SK-N-SH (cell line): ENCODE measurements at regions of chr1 and their contacts with region 1.

Region 1: DNA sequence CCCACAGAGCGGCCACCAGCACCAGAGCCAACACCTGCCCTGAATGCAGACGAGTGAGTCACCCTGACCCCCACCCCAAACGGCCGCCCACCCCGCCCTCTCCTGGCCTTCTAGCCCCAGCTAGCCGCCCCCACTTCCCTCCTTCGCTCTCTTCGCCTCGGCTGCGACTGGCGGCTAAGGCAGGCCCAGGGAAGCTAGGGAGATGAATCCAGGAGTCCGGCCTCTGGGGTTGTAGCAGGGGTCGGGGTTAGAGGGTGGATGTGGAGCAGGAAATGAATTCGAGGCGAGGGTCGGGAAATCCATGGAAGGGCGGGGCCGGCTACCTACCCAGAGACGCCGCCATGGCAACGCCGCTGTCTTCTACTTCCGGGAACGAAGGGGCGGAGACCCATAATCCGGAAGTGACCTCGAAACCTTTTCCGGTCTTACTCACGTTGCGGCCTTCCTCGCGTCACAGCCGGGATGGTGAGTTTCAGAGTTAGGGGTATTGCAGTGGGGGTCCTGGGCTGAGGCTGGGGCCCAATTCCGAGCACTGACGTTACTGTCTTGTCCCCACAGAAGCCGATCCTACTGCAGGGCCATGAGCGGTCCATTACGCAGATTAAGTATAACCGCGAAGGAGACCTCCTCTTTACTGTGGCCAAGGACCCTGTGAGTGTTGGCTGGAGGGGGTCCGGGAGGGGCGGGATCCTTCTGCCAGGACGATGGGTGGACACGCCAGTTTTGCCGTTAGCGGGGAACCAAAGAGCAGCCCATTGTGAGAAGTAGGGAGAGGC is at the starts of genes EIF3I and TMEM234:
- DNase-seq: peak; percentile 93
- H3K4me3 ChIP-seq: peak within 1 kb of the TSS; percentile 59 to 79
- H3K27ac ChIP-seq: peak within 1 kb of the TSS; percentile 79 to 83
- H3K4me1 ChIP-seq: peaks cover 8 to 17% of the 10 kb centered on the region in 2 experiments; a peak in 3 of 4 replicates
- H3K27me3 ChIP-seq: no peaks in the 10 kb centered on the region
- CTCF ChIP-seq: no peak
- EP300 ChIP-seq: no peak
- RAD21 ChIP-seq: no peak
- polyA plus RNA-seq, gene EIF3I: 463 and 479 TPM in 2 replicates
- polyA plus RNA-seq, gene TMEM234: 31.8 and 31.9 TPM in 2 replicates

Region 2: GRCh38 chr1:32240140-32240951 is 18.2 kb after region 1 on chr1:
- CTCF ChIA-PET with region 1: interaction called, 24 read pairs
- POLR2A ChIA-PET with region 1: interaction called, 4 read pairs
- DNase-seq: peak; percentile 89
- H3K4me3 ChIP-seq: peak overlapping the region; percentile 51 to 57
- H3K27ac ChIP-seq: no peak overlapping the region; a peak in 1 of 4 replicates
- H3K4me1 ChIP-seq: peaks cover 12 to 13% of the 10 kb centered on the region in 2 experiments; a peak in 2 of 4 replicates
- H3K27me3 ChIP-seq: no peaks in the 10 kb centered on the region
- CTCF ChIP-seq: peak; percentile 24
- EP300 ChIP-seq: no peak
- RAD21 ChIP-seq: peak; percentile 27